Mammary epithelial cell (primary cell): ENCODE measurements at regions of chr6 and their contacts with region 1.

Region 1: GRCh38 chr6:21808045-21808470 is 214.5 kb downstream of the SOX4 start:
- DNase-seq: peak; percentile 40
- H3K4me3 ChIP-seq: no peak overlapping the region
- H3K27ac ChIP-seq: no peak overlapping the region
- H3K4me1 ChIP-seq: peaks cover 4% of the 10 kb centered on the region
- H3K27me3 ChIP-seq: no peaks in the 10 kb centered on the region
- CTCF ChIP-seq: no peak

Region 2: GRCh38 chr6:21754891-21755290 is 53.2 kb before region 1 on chr6:
- CTCF ChIA-PET with region 1: no interaction called
- dilution Hi-C with region 1: no loop called
- in situ Hi-C with region 1: no loop called
- intact Hi-C with region 1: no loop called
- DNase-seq: peak; percentile 92
- H3K4me3 ChIP-seq: no peak overlapping the region
- H3K27ac ChIP-seq: peak overlapping the region; percentile 67
- H3K4me1 ChIP-seq: peaks cover 37% of the 10 kb centered on the region
- H3K27me3 ChIP-seq: no peaks in the 10 kb centered on the region
- CTCF ChIP-seq: no peak

Region 3: GRCh38 chr6:23498013-23498412 is 1690.0 kb after region 1 on chr6:
- CTCF ChIA-PET with region 1: interaction called, 10 read pairs
- dilution Hi-C with region 1: no loop called
- in situ Hi-C with region 1: no loop called
- intact Hi-C with region 1: no loop called
- DNase-seq: no peak
- H3K4me3 ChIP-seq: no peak overlapping the region
- H3K27ac ChIP-seq: no peak overlapping the region
- H3K4me1 ChIP-seq: no peaks in the 10 kb centered on the region
- H3K27me3 ChIP-seq: no peaks in the 10 kb centered on the region
- CTCF ChIP-seq: no peak